ENCODE measurements at regions of chr20 and their contacts with region 1.

Region 1: GRCh38 chr20:561437-562231 is 18.0 kb upstream of the CSNK2A1 start:
- DNase-seq: peak; percentile 39
- H3K4me3 ChIP-seq: no peak overlapping the region
- H3K27ac ChIP-seq: no peak overlapping the region
- H3K4me1 ChIP-seq: no peaks in the 10 kb centered on the region
- H3K27me3 ChIP-seq: peaks cover 2% of the 10 kb centered on the region
- CTCF ChIP-seq: peak; percentile 64 to 92 (median 88)
- POLR2A ChIP-seq: no peak

Region 2: DNA sequence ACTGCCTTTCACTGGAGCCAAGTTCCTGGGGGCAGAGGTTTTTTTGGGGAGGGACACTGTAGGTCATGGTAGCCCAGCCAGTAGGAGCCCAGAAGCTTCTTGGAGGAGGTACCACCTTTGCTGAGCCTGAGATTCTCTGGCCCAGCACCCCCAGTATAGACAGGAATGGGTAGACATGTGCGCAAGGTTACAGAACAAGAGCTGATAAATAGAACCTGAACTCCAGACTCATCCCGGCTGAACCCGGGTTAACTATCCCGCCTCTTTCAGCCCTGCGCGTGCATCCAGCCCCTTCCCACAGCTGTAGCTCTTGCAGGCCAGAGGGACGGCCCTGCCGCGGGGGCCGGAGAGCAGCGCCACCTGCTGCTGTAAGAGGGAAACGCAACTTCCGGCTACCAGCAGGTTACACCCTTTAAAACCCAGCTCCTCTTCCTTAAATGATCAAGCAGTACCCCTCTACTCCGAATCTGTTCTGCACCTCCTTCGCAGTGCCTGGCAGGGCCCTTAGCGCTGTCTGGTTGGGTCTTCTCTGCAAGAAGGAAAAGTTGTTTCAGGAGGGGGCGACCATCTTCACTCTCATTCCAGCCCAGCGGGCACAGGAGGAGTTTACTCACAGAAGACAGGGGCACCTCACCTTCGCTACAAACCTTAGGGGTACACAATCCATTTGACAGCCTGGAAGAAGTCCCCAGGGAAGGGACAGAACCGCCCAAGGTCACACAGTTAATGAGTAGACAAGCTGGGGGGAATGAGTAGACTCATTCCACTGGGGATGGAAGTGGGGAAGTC is 83.9 kb after region 1 on chr20:
- intact Hi-C with region 1: loop called (anchors 5 kb)
- DNase-seq: peak; percentile 25
- H3K4me3 ChIP-seq: no peak overlapping the region
- H3K27ac ChIP-seq: no peak overlapping the region
- H3K4me1 ChIP-seq: no peaks in the 10 kb centered on the region
- H3K27me3 ChIP-seq: no peaks in the 10 kb centered on the region
- CTCF ChIP-seq: peak; percentile 67 to 85 (median 84)
- POLR2A ChIP-seq: no peak

Region 3: DNA sequence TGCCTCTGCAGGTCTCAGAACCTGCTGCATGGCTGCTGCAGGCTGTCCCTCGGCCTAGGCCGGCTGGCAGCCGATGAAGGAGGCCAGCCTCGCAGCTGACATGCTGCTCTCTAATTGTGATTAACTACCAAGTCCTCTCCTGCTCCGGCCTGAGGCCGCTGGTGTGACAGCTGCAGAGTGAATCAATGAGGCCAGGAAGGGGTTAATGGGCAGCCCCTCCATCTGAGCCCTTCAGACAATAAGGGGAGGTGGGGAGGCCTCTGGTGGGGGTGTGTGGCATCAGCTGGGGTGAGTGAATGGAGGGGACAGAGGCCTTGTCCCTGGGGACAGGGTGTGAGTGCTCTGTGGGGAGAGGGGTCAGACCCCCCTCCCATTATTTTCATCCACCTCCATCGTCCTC is 172.2 kb after region 1 on chr20:
- intact Hi-C with region 1: loop called (anchors 5 kb)
- DNase-seq: no peak
- H3K4me3 ChIP-seq: no peak overlapping the region
- H3K27ac ChIP-seq: no peak overlapping the region
- H3K4me1 ChIP-seq: no peaks in the 10 kb centered on the region
- H3K27me3 ChIP-seq: no peaks in the 10 kb centered on the region
- CTCF ChIP-seq: no peak
- POLR2A ChIP-seq: no peak

Measured in prostate gland (tissue), 2 donors.